ENCODE measurements at regions of chrX and their contacts with region 1.

Region 1: DNA sequence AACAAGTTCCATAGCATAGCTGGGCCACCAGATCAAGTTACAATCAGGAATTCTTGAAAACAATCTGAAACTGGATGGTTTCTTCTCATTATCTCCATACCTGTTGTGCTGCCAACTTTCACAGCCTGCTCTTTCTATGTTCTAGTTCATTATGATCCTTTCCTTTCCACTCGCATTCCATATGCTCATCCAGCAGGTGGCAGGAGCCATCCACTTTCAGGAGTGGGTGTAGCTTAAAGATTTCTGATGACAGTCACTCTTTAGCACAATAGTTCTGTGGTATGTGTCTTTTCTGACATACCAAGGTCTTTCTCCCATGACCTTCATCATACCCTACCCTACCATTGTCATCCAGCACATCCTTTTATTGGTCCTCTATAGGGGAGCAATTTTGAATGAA is 46.4 kb downstream of the PAGE2 start:
- DNase-seq: peak; percentile 21 to 65 (median 44)
- H3K4me3 ChIP-seq: no peak overlapping the region
- H3K27ac ChIP-seq: no peak overlapping the region
- H3K4me1 ChIP-seq: no peaks in the 10 kb centered on the region
- H3K27me3 ChIP-seq: peaks cover 6% of the 10 kb centered on the region
- CTCF ChIP-seq: peak; percentile 38 to 69 (median 65)
- POLR2A ChIP-seq: no peak

Region 2: GRCh38 chrX:54798137-54798536 is 337.0 kb before region 1 on chrX and contains the start of gene ITIH6:
- intact Hi-C with region 1: no loop called
- DNase-seq: no peak
- H3K4me3 ChIP-seq: no peak within 1 kb of the TSS
- H3K27ac ChIP-seq: no peak within 1 kb of the TSS
- H3K4me1 ChIP-seq: no peaks in the 10 kb centered on the region
- H3K27me3 ChIP-seq: peaks cover 6% of the 10 kb centered on the region
- CTCF ChIP-seq: no peak
- POLR2A ChIP-seq: no peak
- total RNA-seq, gene ITIH6: under 0.01 TPM in 1 of 9 donors, not detected in the others

Region 3: GRCh38 chrX:55279832-55280231 is 144.7 kb after region 1 on chrX:
- intact Hi-C with region 1: no loop called
- DNase-seq: no peak
- H3K4me3 ChIP-seq: no peak overlapping the region
- H3K27ac ChIP-seq: no peak overlapping the region
- H3K4me1 ChIP-seq: no peaks in the 10 kb centered on the region
- H3K27me3 ChIP-seq: peaks cover 16% of the 10 kb centered on the region
- CTCF ChIP-seq: no peak
- POLR2A ChIP-seq: no peak

Region 4: DNA sequence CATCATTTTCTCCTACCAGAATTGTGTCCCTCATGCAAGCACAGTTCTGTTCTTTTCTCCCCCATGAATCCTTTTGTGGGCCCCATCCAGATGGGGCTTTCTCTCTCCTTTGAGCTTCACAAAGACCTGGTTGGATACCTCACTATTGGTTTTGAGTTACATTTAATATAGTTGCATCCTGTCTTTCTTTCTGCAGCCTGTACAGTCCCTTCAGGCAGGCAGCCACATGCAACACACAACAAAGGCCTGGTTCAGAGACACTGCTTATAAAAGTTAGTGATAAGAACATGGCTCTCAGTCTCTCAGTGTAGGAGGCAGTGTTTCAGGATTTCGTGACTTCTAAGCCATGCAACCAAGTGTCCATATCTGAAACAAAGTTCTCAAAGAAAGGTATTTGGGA is 200.1 kb after region 1 on chrX:
- intact Hi-C with region 1: loop called (anchors 10 kb)
- DNase-seq: no peak
- H3K4me3 ChIP-seq: no peak overlapping the region
- H3K27ac ChIP-seq: no peak overlapping the region
- H3K4me1 ChIP-seq: no peaks in the 10 kb centered on the region
- H3K27me3 ChIP-seq: peaks cover 13% of the 10 kb centered on the region
- CTCF ChIP-seq: no peak
- POLR2A ChIP-seq: no peak

Region 5: GRCh38 chrX:55342533-55343501 is 207.6 kb after region 1 on chrX:
- intact Hi-C with region 1: loop called (anchors 10 kb)
- DNase-seq: peak; percentile 18 to 64 (median 41)
- H3K4me3 ChIP-seq: no peak overlapping the region
- H3K27ac ChIP-seq: no peak overlapping the region
- H3K4me1 ChIP-seq: no peaks in the 10 kb centered on the region
- H3K27me3 ChIP-seq: peaks cover 15% of the 10 kb centered on the region
- CTCF ChIP-seq: peak; percentile 42 to 66 (median 54)
- POLR2A ChIP-seq: no peak

Measured in adrenal gland (tissue), 19 donors.